HEK293 (cell line): ENCODE measurements at regions of chr18 and their contacts with region 1.

Region 1: DNA sequence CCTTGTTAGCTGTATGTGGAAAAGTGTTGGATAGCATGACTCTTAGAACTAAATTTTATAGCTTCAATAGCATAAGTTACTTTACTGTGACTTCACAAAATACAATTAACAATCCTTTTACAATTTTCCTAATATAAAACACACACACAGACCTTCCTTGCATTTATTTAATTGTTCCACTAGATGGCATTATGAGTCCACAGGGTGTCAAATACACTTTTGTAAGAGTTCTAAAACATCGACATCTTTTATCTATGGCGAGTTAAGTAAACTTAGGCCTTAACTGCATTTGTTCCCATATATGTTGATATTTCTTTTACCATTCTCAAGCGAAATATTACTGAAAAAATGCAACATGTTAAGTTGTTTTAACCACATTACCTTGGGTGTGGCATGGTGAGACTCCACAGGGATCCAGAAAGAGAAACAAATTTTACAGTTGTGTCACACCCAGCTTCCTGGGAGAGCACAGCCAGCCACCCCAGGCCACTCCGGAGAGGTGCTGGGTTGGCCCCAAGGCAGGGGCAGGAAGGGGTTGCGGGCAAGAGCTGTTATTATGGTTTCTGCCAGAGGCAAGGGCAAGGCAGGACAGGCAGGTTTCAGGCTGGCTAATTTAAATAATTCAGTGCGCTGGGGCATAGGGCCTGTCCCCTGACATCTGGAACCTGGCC is 312.4 kb upstream of the MC4R start:
- H3K4me3 ChIP-seq: no peak overlapping the region
- H3K27ac ChIP-seq: no peak overlapping the region
- H3K4me1 ChIP-seq: no peaks in the 10 kb centered on the region
- CTCF ChIP-seq: no peak

Region 2: DNA sequence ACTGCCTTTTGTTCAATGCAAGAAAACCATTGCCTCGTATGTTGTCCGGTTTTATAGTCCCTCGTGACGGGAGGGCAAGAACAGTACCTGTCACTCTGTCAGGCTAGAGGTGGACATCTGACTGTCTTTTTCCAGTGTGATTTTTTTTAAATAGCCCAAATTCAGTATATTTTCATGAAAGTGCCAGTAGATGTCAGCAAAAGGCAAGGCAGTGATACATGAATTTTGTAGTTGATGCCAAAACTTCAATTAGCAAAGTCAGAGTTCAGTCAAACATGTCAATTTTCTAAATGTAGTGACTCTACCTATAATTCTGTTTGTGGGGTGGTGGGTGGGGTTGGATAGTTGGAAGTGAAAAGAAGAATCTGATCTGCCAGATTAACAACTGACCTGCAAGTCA is 16.4 kb before region 1 on chr18:
- CTCF ChIA-PET with region 1: interaction called, 11 read pairs
- POLR2A ChIA-PET with region 1: no interaction called
- H3K4me3 ChIP-seq: no peak overlapping the region
- H3K27ac ChIP-seq: no peak overlapping the region
- H3K4me1 ChIP-seq: no peaks in the 10 kb centered on the region
- CTCF ChIP-seq: no peak